ENCODE measurements at regions of chr1 and their contacts with region 1.

Region 1: DNA sequence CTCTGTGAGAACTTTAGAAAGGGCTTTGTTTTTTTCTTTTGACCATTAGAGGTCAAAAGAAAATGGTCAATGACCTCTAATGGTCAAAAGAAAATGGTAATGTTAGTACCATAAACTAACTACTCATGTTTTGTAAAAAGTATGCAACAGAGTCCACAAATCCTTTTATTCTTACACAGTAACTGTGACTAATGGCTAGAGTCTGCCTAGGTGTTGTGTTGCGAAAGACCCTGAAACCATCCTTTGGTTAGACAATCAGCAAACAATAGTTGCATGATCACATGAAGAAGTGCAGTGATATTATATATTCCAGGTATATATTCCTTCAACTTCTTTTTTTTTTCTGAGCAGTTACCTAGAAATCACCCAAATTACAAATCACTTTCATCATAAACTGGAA is 40.9 kb downstream of the NEGR1 start:
- DNase-seq: no peak
- ATAC-seq: no peak
- H3K4me3 ChIP-seq: no peak overlapping the region
- H3K4me3 Mint-ChIP-seq: no peak overlapping the region
- H3K27ac ChIP-seq: no peak overlapping the region
- H3K27ac Mint-ChIP-seq: no peak overlapping the region
- H3K4me1 ChIP-seq: no peaks in the 10 kb centered on the region
- H3K4me1 Mint-ChIP-seq: no peaks in the 10 kb centered on the region
- H3K27me3 ChIP-seq: no peaks in the 10 kb centered on the region
- H3K27me3 Mint-ChIP-seq: no peaks in the 10 kb centered on the region

Region 2: GRCh38 chr1:72202761-72203160 is 38.6 kb before region 1 on chr1:
- CTCF ChIA-PET with region 1: no interaction called
- POLR2A ChIA-PET with region 1: interaction called in 1 of 2 experiments, 14 read pairs
- DNase-seq: no peak
- ATAC-seq: no peak
- H3K4me3 ChIP-seq: no peak overlapping the region
- H3K4me3 Mint-ChIP-seq: no peak overlapping the region
- H3K27ac ChIP-seq: no peak overlapping the region
- H3K27ac Mint-ChIP-seq: no peak overlapping the region
- H3K4me1 ChIP-seq: no peaks in the 10 kb centered on the region
- H3K4me1 Mint-ChIP-seq: no peaks in the 10 kb centered on the region
- H3K27me3 ChIP-seq: no peaks in the 10 kb centered on the region
- H3K27me3 Mint-ChIP-seq: no peaks in the 10 kb centered on the region

Region 3: DNA sequence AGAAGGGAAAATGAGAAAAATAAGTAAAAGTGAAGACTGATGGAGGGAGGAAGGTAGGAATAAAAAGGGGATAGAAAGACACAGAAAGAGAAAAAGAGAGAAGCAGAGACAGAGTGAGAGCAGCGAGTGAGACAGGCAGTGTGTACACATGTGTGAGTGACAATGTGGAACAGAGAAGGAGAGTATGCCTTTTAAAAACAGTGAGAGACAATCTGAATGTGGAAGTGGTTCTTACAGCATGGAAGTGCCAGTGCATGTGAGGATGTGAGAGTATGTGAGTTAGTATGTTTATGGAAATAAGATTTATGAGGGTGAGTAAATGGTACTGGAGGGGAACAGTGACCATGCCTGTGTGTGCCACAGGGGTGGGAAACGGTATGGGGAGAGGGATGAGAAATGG is 39.7 kb after region 1 on chr1:
- CTCF ChIA-PET with region 1: no interaction called
- POLR2A ChIA-PET with region 1: no interaction called
- DNase-seq: no peak
- ATAC-seq: no peak
- H3K4me3 ChIP-seq: no peak overlapping the region
- H3K4me3 Mint-ChIP-seq: peak overlapping the region in 2 of 3 donors; percentile 70 to 74
- H3K27ac ChIP-seq: no peak overlapping the region
- H3K27ac Mint-ChIP-seq: no peak overlapping the region
- H3K4me1 ChIP-seq: peaks cover 6 to 9% of the 10 kb centered on the region in 2 experiments
- H3K4me1 Mint-ChIP-seq: peaks cover 15 to 24% (median 20%) of the 10 kb centered on the region in 3 donors
- H3K27me3 ChIP-seq: peaks cover 0 to 21% of the 10 kb centered on the region in 2 experiments
- H3K27me3 Mint-ChIP-seq: peaks cover 0 to 15% of the 10 kb centered on the region in 2 donors